Posterior vena cava (tissue), 2 donors: ENCODE measurements at regions of chr3 and their contacts with region 1.

Region 1: GRCh38 chr3:127786353-127787070 is 35.8 kb downstream of the MGLL start:
- DNase-seq: peak; percentile 92

Region 2: DNA sequence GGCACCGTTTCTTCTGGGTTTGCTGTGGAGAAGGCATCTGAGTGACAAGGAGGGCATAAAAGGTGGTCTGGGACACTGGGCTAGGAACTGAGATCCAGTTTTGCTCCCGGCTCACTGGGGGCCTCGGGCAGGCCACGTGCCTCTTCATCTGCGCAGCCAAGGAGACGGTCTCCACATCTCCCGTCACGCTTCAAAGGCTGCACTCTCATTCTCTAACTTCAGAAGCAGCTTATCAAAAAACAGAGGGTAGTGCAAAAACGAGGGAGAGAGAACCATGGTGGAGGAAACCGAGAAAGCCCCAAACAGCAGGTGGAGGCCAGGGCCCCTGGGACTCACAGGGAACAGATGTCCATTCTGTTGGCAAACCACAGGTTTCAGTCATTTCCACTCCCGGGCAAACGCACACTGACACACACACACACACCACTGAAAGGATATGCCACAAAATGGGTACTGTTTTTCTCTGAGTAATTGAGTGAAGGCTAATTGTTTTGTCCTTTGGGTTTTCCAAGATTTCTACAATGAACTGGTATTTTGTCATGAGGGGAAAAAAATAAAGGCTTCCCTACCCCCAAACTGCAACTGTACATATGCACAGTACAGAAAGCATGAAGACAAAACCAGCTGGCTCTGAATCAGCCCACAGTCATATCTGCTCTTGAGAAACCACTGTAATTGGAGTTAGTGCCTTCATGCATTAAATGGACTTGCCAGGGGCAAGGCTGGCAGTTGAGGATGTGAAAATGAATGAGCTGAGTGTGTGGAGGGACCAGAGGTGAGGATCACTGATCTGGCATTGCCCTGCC is 36.1 kb before region 1 on chr3:
- intact Hi-C with region 1: loop called in 1 of 2 experiments (anchors 5 kb)
- DNase-seq: peak; percentile 46

Region 3: GRCh38 chr3:127761439-127761801 is 25.1 kb before region 1 on chr3:
- intact Hi-C with region 1: no loop called
- DNase-seq: peak; percentile 81

Region 4: DNA sequence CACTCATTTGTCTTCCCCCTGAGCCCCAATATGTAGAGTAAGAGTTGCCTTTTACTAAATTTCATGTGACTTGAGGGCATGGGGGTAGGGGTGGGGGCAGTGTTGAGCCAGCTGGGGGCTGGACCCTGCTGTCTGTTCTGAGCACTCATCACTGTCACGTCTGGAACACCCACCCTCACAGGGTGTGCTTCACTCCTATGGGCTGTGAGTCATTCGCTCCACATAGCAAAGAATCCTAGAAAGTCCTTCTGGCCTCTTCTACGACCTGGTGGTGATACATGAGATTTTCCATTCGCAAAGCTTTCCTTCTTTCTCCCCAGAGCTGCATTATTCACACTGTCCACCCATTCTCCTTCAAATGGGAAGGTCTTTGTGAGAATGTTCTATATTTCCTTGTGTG is 79.4 kb after region 1 on chr3:
- intact Hi-C with region 1: no loop called
- DNase-seq: no peak